ENCODE measurements at regions of chr2 and their contacts with region 1.

Region 1: DNA sequence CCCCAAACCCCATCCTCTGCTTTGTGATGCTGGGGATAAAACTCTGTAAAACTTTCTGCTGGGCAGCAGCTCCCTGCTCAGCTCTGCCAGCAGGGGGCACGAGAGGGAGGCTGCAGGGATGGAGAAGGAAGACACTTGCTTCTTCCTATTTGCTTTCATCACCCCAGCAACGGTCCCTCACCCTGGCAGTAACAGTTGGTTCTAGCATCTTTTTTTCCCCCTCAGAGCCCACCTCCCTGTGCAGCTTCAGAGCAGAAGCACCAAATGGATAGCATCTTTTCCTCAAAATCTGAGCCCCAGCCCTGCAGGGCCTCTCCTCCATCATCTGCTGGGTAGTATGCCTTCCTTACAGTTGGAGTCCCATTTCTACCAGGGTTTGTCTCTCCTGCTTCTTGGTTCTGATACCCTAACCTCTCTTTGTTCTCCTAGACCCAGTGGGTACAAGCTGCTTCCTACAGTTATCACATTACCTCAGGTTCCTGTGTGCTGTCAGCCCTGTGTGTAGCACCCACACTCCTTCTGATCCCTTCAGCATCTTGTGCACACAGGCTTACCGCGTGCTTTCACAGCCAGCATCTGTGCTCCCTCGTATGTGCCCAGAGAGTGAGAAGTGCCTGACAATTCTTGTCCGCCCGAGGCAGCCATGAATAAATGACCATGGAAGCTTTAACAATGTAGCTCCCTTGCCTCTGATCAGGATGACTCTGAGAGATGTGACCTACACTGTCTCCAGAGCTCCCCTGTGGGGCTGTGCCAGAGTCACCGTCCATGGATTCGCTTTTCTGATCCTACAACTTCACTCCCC is 14.5 kb downstream of the CKAP2L start:
- DNase-seq: peak; percentile 60
- H3K4me3 ChIP-seq: no peak overlapping the region
- H3K27ac ChIP-seq: peak overlapping the region; percentile 28
- H3K4me1 ChIP-seq: peaks cover 6% of the 10 kb centered on the region
- H3K27me3 ChIP-seq: no peaks in the 10 kb centered on the region
- CTCF ChIP-seq: peak; percentile 97 to 99

Region 2: GRCh38 chr2:112884869-112885505 is 135.0 kb after region 1 on chr2:
- CTCF ChIA-PET with region 1: interaction called, 4 read pairs
- dilution Hi-C with region 1: no loop called
- in situ Hi-C with region 1: no loop called
- intact Hi-C with region 1: loop called (anchors 1 kb)
- DNase-seq: peak; percentile 44
- H3K4me3 ChIP-seq: no peak overlapping the region
- H3K27ac ChIP-seq: no peak overlapping the region
- H3K4me1 ChIP-seq: peaks cover 43% of the 10 kb centered on the region
- H3K27me3 ChIP-seq: no peaks in the 10 kb centered on the region
- CTCF ChIP-seq: peak; percentile 79 to 93

Measured in mammary epithelial cell (primary cell).